ENCODE measurements at regions of chr2 and their contacts with region 1.

Region 1: DNA sequence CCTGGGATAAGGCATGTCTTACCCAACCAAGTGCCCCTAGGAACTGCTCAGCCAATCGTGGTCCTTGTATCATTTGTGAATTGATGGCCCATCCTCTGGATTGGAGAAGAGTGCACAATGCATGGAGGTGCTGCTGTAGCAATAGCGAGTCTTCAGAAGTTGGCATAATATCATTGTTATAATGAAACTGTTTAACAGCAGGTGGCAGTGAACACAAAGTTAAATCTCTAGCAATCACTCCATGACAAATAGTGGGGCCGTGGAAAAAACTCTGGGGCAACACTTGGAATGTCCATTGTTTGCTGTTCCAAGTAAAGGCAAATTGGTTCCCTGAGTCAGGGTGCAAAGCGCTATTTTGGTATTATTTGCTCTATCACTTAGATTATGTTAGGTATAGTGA is 11.4 kb downstream of the REG1A start:
- DNase-seq: peak in 1 of 6 donors; percentile 49
- ATAC-seq: peak; percentile 28 to 72 (median 60)
- H3K4me3 ChIP-seq: no peak overlapping the region
- H3K27ac ChIP-seq: peak overlapping the region in 2 of 4 donors; percentile 1 to 70
- H3K4me1 ChIP-seq: peaks cover 0 to 11% (median 4%) of the 10 kb centered on the region in 3 donors
- H3K27me3 ChIP-seq: no peaks in the 10 kb centered on the region
- CTCF ChIP-seq: no peak

Region 2: DNA sequence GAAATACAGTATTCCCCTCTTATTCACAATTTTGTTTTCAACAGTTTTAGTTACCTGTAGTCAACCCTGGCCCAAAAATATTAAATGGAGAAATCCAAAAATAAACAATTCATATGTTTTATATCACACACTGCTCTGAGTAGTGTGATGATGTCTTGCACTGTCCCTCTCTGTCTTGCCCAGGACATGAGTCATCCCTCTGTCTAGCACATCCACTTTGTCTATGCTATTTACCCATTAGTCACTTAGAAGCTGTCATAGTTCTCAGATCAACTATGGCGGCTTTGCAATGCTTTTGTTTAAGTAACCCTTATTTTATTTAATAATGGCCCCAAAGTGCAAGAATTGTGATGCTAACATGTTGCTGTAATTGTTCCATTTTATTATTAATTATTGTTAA is 486.8 kb before region 1 on chr2:
- intact Hi-C with region 1: no loop called
- DNase-seq: no peak
- ATAC-seq: no peak
- H3K4me3 ChIP-seq: no peak overlapping the region
- H3K27ac ChIP-seq: no peak overlapping the region
- H3K4me1 ChIP-seq: no peaks in the 10 kb centered on the region
- H3K27me3 ChIP-seq: no peaks in the 10 kb centered on the region
- CTCF ChIP-seq: no peak

Region 3: GRCh38 chr2:79025421-79025820 is 106.3 kb before region 1 on chr2 and contains the start of gene REG3G:
- intact Hi-C with region 1: loop called in 1 of 3 experiments (anchors 10 kb)
- DNase-seq: peak in 4 of 6 donors; percentile 28 to 82 (median 78)
- ATAC-seq: peak; percentile 74 to 94 (median 83)
- H3K4me3 ChIP-seq: peak within 1 kb of the TSS in 2 of 4 donors; percentile 10 to 41
- H3K27ac ChIP-seq: peak within 1 kb of the TSS in 3 of 4 donors; percentile 16 to 69 (median 64)
- H3K4me1 ChIP-seq: peaks cover 8 to 24% (median 15%) of the 10 kb centered on the region in 3 donors
- H3K27me3 ChIP-seq: no peaks in the 10 kb centered on the region
- CTCF ChIP-seq: no peak
- total RNA-seq, gene REG3G: 46.6 to 5,387 (median 1,714) TPM

Region 4: DNA sequence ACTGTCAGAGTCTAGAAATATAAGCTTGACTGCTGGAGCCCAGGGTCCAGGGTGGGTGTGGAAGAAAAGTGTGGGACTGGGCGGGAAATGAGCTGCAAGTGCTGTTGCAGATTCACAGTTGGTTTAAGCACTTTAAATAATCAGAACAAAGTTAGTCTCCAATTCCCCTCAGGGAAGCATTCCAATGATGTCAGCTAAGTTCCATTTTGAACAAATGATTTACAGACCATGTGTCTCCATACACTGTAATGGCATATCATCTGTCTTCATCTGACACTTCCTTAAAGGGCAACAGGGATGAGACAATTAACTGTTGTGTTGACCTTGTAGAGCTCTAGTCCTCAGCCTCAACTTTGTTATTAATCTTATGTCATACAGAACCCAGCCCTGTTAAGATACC is 59.4 kb after region 1 on chr2:
- intact Hi-C with region 1: no loop called
- DNase-seq: no peak
- ATAC-seq: peak in 2 of 4 donors; percentile 11 to 16
- H3K4me3 ChIP-seq: no peak overlapping the region
- H3K27ac ChIP-seq: peak overlapping the region in 3 of 4 donors; percentile 7 to 71 (median 68)
- H3K4me1 ChIP-seq: peaks cover 10 to 45% (median 43%) of the 10 kb centered on the region in 3 donors
- H3K27me3 ChIP-seq: no peaks in the 10 kb centered on the region
- CTCF ChIP-seq: no peak

Region 5: GRCh38 chr2:79887747-79888374 is 756.2 kb after region 1 on chr2:
- intact Hi-C with region 1: loop called in 1 of 3 experiments (anchors 10 kb)
- DNase-seq: peak in 2 of 6 donors; percentile 26 to 48
- ATAC-seq: peak; percentile 55 to 84 (median 78)
- H3K4me3 ChIP-seq: no peak overlapping the region
- H3K27ac ChIP-seq: no peak overlapping the region
- H3K4me1 ChIP-seq: peaks cover 6 to 14% (median 14%) of the 10 kb centered on the region in 3 donors
- H3K27me3 ChIP-seq: no peaks in the 10 kb centered on the region
- CTCF ChIP-seq: peak; percentile 21 to 62 (median 54)

Measured in pancreas (tissue), 10 donors.